ENCODE measurements at regions of chr2 and their contacts with region 1.

Region 1: GRCh38 chr2:70161069-70161534 is 29.7 kb downstream of the C2orf42 start:
- DNase-seq: peak in 8 of 35 experiments; percentile 5 to 32 (median 10)
- ATAC-seq: peak; percentile 61 to 85 (median 64)
- H3K4me3 ChIP-seq: no peak overlapping the region
- H3K4me3 Mint-ChIP-seq: no peak overlapping the region
- H3K27ac ChIP-seq: no peak overlapping the region
- H3K27ac Mint-ChIP-seq: peak overlapping the region; percentile 79 to 81
- H3K4me1 ChIP-seq: no peaks in the 10 kb centered on the region
- H3K4me1 Mint-ChIP-seq: peaks cover 7 to 8% (median 8%) of the 10 kb centered on the region in 3 donors
- H3K27me3 ChIP-seq: no peaks in the 10 kb centered on the region
- H3K27me3 Mint-ChIP-seq: no peaks in the 10 kb centered on the region

Region 2: GRCh38 chr2:69956475-69956979 is 204.6 kb before region 1 on chr2:
- CTCF ChIA-PET with region 1: no interaction called
- POLR2A ChIA-PET with region 1: interaction called in 1 of 2 experiments, 11 read pairs
- DNase-seq: no peak
- ATAC-seq: no peak
- H3K4me3 ChIP-seq: no peak overlapping the region
- H3K4me3 Mint-ChIP-seq: no peak overlapping the region
- H3K27ac ChIP-seq: no peak overlapping the region
- H3K27ac Mint-ChIP-seq: no peak overlapping the region
- H3K4me1 ChIP-seq: peaks cover 0 to 5% of the 10 kb centered on the region in 2 experiments
- H3K4me1 Mint-ChIP-seq: peaks cover 0 to 5% (median 0%) of the 10 kb centered on the region in 3 donors
- H3K27me3 ChIP-seq: peaks cover 0 to 21% of the 10 kb centered on the region in 2 experiments
- H3K27me3 Mint-ChIP-seq: peaks cover 2 to 4% of the 10 kb centered on the region in 2 donors

Region 3: GRCh38 chr2:70142590-70143313 is 18.4 kb before region 1 on chr2:
- CTCF ChIA-PET with region 1: no interaction called
- POLR2A ChIA-PET with region 1: no interaction called
- DNase-seq: peak; percentile 98 to 100 (median 99)
- ATAC-seq: peak; percentile 79 to 83 (median 82)
- H3K4me3 ChIP-seq: peak overlapping the region; percentile 3 to 54
- H3K4me3 Mint-ChIP-seq: peak overlapping the region; percentile 82 to 88 (median 87)
- H3K27ac ChIP-seq: peak overlapping the region; percentile 97
- H3K27ac Mint-ChIP-seq: peak overlapping the region; percentile 97
- H3K4me1 ChIP-seq: peaks cover 31 to 52% of the 10 kb centered on the region in 2 experiments
- H3K4me1 Mint-ChIP-seq: peaks cover 55 to 73% (median 59%) of the 10 kb centered on the region in 3 donors
- H3K27me3 ChIP-seq: no peaks in the 10 kb centered on the region
- H3K27me3 Mint-ChIP-seq: no peaks in the 10 kb centered on the region

Region 4: DNA sequence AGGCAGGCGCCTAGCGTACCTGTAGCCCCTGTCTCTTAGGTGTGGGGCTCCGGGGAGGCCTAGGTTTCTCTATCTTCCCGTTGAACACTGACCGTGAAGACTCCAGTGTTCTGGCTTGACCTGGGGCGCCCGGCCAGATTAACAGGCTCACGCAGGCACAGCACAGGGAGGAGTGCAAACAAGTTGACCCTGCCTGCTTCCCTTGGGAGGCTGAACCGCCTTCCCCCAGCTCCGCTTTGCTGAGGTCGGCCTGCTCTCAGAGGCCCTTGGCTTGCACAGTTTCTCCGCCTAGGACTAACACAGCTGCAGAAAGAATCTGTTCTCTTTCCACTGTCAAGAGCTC is 97.4 kb after region 1 on chr2:
- CTCF ChIA-PET with region 1: interaction called in 1 of 2 experiments, 11 read pairs
- POLR2A ChIA-PET with region 1: no interaction called
- DNase-seq: peak in 2 of 35 experiments; percentile 3 to 5
- ATAC-seq: peak in 2 of 4 experiments; percentile 15 to 26
- H3K4me3 ChIP-seq: peak overlapping the region; percentile 41 to 72
- H3K4me3 Mint-ChIP-seq: peak overlapping the region; percentile 85 to 91 (median 86)
- H3K27ac ChIP-seq: no peak overlapping the region
- H3K27ac Mint-ChIP-seq: peak overlapping the region; percentile 85 to 86
- H3K4me1 ChIP-seq: peaks cover 5 to 20% of the 10 kb centered on the region in 2 experiments
- H3K4me1 Mint-ChIP-seq: peaks cover 39 to 44% (median 43%) of the 10 kb centered on the region in 3 donors
- H3K27me3 ChIP-seq: no peaks in the 10 kb centered on the region
- H3K27me3 Mint-ChIP-seq: no peaks in the 10 kb centered on the region

Measured in T-cell (primary cell).